SK-N-SH (cell line): ENCODE measurements at regions of chr4 and their contacts with region 1.

Region 1: GRCh38 chr4:151604238-151604637 is 156.6 kb downstream of the GATB start:
- DNase-seq: peak; percentile 48
- H3K4me3 ChIP-seq: no peak overlapping the region
- H3K27ac ChIP-seq: 0 out of 4 replicates have a peak overlapping the region, but pooled peaks of 1 of the 2 experiments have one; percentile 26
- H3K4me1 ChIP-seq: peaks cover 0 to 22% of the 10 kb centered on the region in 2 experiments; a peak in 2 of 4 replicates
- H3K27me3 ChIP-seq: no peaks in the 10 kb centered on the region
- CTCF ChIP-seq: peak; percentile 69
- EP300 ChIP-seq: no peak
- RAD21 ChIP-seq: peak; percentile 76

Region 2: GRCh38 chr4:151362404-151363164 is 241.7 kb before region 1 on chr4:
- CTCF ChIA-PET with region 1: interaction called, 13 read pairs
- POLR2A ChIA-PET with region 1: no interaction called
- DNase-seq: peak; percentile 83
- H3K4me3 ChIP-seq: peak overlapping the region in 1 of 2 experiments; percentile 46; a peak in 1 of 4 replicates
- H3K27ac ChIP-seq: no peak overlapping the region
- H3K4me1 ChIP-seq: peaks cover 0 to 5% of the 10 kb centered on the region in 2 experiments; a peak in 1 of 4 replicates
- H3K27me3 ChIP-seq: no peaks in the 10 kb centered on the region
- CTCF ChIP-seq: peak; percentile 99
- EP300 ChIP-seq: no peak
- RAD21 ChIP-seq: peak; percentile 100

Region 3: DNA sequence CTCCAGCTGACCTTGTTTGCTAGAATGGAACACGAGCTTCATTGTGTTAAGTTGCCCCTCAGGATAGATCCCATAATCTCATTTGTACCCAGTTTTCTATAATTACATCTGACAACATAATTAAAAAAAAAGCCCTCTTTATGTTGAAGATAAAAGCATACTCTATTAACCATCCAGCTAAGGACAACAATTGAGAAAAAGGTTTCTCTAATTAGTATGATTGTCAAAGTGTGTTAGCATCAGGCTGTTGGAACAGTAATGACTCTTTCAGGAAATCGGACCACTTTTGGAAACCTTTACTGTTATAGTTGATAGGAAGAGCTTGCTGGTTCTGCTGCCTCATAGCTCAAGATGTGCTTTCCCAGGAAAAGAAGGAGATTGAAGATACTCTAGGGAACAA is 22.7 kb before region 1 on chr4:
- CTCF ChIA-PET with region 1: interaction called, 15 read pairs
- POLR2A ChIA-PET with region 1: no interaction called
- DNase-seq: peak; percentile 30
- H3K4me3 ChIP-seq: no peak overlapping the region
- H3K27ac ChIP-seq: peak overlapping the region in 1 of 2 experiments; percentile 76; a peak in 2 of 4 replicates
- H3K4me1 ChIP-seq: peaks cover 0 to 13% of the 10 kb centered on the region in 2 experiments; a peak in 2 of 4 replicates
- H3K27me3 ChIP-seq: no peaks in the 10 kb centered on the region
- CTCF ChIP-seq: no peak
- EP300 ChIP-seq: peak in 1 of 2 experiments; percentile 48; a peak in 2 of 4 replicates
- RAD21 ChIP-seq: no peak